ENCODE measurements at regions of chr2 and their contacts with region 1.

Region 1: DNA sequence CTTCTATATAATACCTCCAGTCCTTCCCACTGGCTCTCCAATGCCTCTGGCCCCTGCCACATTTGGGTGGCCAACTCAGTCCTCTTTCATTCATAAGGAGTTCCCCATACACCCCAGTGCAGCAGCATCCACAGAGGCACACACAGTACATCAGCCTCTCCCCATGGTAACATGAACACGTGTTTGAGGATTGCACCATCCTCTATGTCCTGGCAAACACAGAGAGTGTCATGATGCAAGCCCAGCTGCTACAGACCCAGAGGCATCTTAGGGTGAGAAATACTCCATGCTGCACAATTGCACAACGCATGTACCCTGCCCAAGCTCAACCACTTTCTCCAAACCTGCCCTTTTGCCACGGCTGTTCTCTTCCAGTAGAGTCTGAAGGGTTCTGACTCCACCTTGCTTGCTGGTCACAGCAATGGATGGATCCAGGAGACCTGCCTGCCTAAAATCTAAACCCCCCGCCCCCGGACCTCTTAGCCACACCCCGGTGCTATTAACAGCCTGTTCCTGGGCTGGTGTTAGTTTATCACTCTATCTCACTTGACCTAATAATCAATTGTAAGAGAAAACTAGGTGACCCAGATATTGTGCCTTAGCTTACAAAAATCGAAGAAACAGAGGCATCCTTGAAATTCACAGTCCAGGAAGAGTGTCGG is 11.4 kb downstream of the IGFBP5 start:
- DNase-seq: peak in 2 of 14 experiments; percentile 38 to 45
- ATAC-seq: no peak
- H3K4me3 ChIP-seq: no peak overlapping the region
- H3K4me3 Mint-ChIP-seq: no peak overlapping the region
- H3K27ac ChIP-seq: no peak overlapping the region
- H3K27ac Mint-ChIP-seq: no peak overlapping the region
- H3K4me1 ChIP-seq: no peaks in the 10 kb centered on the region
- H3K4me1 Mint-ChIP-seq: no peaks in the 10 kb centered on the region
- H3K27me3 ChIP-seq: peaks cover 8 to 25% of the 10 kb centered on the region in 2 experiments
- H3K27me3 Mint-ChIP-seq: peaks cover 58% of the 10 kb centered on the region
- CTCF ChIP-seq: no peak

Region 2: DNA sequence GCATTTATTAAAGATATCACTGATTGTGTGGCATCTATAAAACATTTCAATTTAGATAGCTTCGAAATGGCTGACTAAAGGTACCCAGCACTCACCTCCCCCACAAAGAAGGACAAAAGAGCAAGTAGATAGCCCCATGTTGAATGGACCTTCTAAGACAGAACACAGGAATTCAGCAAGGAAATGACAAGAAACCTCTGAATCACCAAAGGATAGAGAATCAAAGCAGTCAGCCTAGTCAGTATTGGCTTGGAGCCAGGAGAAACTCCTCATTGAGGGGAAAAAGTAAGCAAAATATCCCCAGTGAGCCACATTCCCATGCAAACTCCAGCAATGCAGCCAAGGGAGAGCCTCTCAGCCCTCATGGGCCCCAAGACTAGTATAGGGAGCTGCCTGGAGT is 1988.2 kb before region 1 on chr2:
- CTCF ChIA-PET with region 1: no interaction called
- POLR2A ChIA-PET with region 1: no interaction called
- intact Hi-C with region 1: no loop called
- DNase-seq: no peak
- ATAC-seq: no peak
- H3K4me3 ChIP-seq: no peak overlapping the region
- H3K4me3 Mint-ChIP-seq: no peak overlapping the region
- H3K27ac ChIP-seq: no peak overlapping the region
- H3K27ac Mint-ChIP-seq: no peak overlapping the region
- H3K4me1 ChIP-seq: no peaks in the 10 kb centered on the region
- H3K4me1 Mint-ChIP-seq: no peaks in the 10 kb centered on the region
- H3K27me3 ChIP-seq: no peaks in the 10 kb centered on the region
- H3K27me3 Mint-ChIP-seq: no peaks in the 10 kb centered on the region
- CTCF ChIP-seq: no peak

Region 3: GRCh38 chr2:217049956-217050355 is 366.0 kb after region 1 on chr2:
- CTCF ChIA-PET with region 1: no interaction called
- POLR2A ChIA-PET with region 1: no interaction called
- intact Hi-C with region 1: no loop called
- DNase-seq: no peak
- ATAC-seq: no peak
- H3K4me3 ChIP-seq: no peak overlapping the region
- H3K4me3 Mint-ChIP-seq: no peak overlapping the region
- H3K27ac ChIP-seq: no peak overlapping the region
- H3K27ac Mint-ChIP-seq: no peak overlapping the region
- H3K4me1 ChIP-seq: no peaks in the 10 kb centered on the region
- H3K4me1 Mint-ChIP-seq: no peaks in the 10 kb centered on the region
- H3K27me3 ChIP-seq: no peaks in the 10 kb centered on the region
- H3K27me3 Mint-ChIP-seq: peaks cover 7% of the 10 kb centered on the region
- CTCF ChIP-seq: no peak

Region 4: DNA sequence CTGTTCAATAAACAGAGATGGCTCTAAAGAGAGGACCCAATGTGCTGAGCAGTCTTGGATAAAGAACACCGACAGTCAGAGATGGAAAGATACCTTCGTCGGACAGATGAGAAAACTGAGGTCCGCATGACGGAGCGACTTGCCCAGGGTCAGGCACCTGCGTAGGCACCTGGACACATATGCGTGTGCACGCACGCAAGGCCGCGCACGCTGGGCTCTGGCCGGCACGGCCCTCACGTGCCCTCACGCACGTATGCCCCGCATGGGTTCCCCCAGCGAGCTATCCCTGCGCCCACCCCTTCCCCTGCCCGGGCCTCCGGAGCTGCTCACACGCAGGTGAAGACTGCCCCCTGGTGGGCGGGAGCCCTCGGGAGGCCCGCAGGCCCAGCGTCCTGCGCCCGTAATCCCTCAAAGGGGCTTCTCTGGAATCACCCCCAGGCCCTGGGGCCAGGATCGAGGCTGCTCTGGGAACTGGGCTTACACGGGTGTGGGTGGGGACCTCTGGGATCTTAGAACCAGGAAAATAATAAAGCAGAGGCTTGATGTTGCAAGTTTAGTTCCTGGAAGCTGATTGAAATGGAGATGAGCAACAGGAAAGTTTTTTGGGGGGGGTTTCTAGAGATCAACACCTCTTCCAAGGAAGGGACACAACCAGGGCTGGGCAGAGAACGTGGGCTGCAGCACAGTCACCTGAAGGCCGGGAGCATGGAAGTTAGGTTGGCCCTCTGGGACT is 1072.6 kb after region 1 on chr2:
- CTCF ChIA-PET with region 1: no interaction called
- POLR2A ChIA-PET with region 1: no interaction called
- intact Hi-C with region 1: loop called (anchors 1 kb)
- DNase-seq: peak; percentile 44 to 82 (median 59)
- ATAC-seq: peak; percentile 85
- H3K4me3 ChIP-seq: peak overlapping the region; percentile 17
- H3K4me3 Mint-ChIP-seq: peak overlapping the region; percentile 36
- H3K27ac ChIP-seq: no peak overlapping the region
- H3K27ac Mint-ChIP-seq: no peak overlapping the region
- H3K4me1 ChIP-seq: peaks cover 19% of the 10 kb centered on the region
- H3K4me1 Mint-ChIP-seq: peaks cover 30% of the 10 kb centered on the region
- H3K27me3 ChIP-seq: peaks cover 0 to 7% of the 10 kb centered on the region in 2 experiments
- H3K27me3 Mint-ChIP-seq: peaks cover 10% of the 10 kb centered on the region
- CTCF ChIP-seq: peak; percentile 93

Measured in CD4-positive, alpha-beta T cell (primary cell).